OCI-LY7 (cell line): ENCODE measurements at regions of chr12 and their contacts with region 1.

Region 1: GRCh38 chr12:122003651-122004611 is 17.8 kb upstream of the BCL7A start:
- DNase-seq: peak; percentile 99
- H3K4me3 ChIP-seq: peak overlapping the region; percentile 78
- H3K27ac ChIP-seq: peak overlapping the region; percentile 100
- H3K4me1 ChIP-seq: peaks cover 80% of the 10 kb centered on the region
- CTCF ChIP-seq: no peak

Region 2: GRCh38 chr12:120292661-120293531 is 1711.0 kb before region 1 on chr12 and contains the start of gene RNU4-1:
- CTCF ChIA-PET with region 1: no interaction called
- POLR2A ChIA-PET with region 1: no interaction called
- intact Hi-C with region 1: loop called (anchors 10 kb)
- DNase-seq: peak; percentile 97
- H3K4me3 ChIP-seq: peak within 1 kb of the TSS; percentile 68
- H3K27ac ChIP-seq: peak within 1 kb of the TSS; percentile 89
- H3K4me1 ChIP-seq: peaks cover 32% of the 10 kb centered on the region
- CTCF ChIP-seq: no peak
- total RNA-seq, gene RNU4-1: under 0.01 TPM in 1 of 2 replicates, not detected in the other

Region 3: GRCh38 chr12:121917979-121918678 is 85.8 kb before region 1 on chr12 and contains the start of gene CFAP251:
- CTCF ChIA-PET with region 1: interaction called, 3 read pairs
- POLR2A ChIA-PET with region 1: interaction called, 6 read pairs
- intact Hi-C with region 1: loop called (anchors 1 kb)
- DNase-seq: peak; percentile 96
- H3K4me3 ChIP-seq: peak within 1 kb of the TSS; percentile 69
- H3K27ac ChIP-seq: peak within 1 kb of the TSS; percentile 45
- H3K4me1 ChIP-seq: peaks cover 37% of the 10 kb centered on the region
- CTCF ChIP-seq: peak; percentile 75
- total RNA-seq, gene CFAP251: 4.1 and 6.6 TPM in 2 replicates

Region 4: DNA sequence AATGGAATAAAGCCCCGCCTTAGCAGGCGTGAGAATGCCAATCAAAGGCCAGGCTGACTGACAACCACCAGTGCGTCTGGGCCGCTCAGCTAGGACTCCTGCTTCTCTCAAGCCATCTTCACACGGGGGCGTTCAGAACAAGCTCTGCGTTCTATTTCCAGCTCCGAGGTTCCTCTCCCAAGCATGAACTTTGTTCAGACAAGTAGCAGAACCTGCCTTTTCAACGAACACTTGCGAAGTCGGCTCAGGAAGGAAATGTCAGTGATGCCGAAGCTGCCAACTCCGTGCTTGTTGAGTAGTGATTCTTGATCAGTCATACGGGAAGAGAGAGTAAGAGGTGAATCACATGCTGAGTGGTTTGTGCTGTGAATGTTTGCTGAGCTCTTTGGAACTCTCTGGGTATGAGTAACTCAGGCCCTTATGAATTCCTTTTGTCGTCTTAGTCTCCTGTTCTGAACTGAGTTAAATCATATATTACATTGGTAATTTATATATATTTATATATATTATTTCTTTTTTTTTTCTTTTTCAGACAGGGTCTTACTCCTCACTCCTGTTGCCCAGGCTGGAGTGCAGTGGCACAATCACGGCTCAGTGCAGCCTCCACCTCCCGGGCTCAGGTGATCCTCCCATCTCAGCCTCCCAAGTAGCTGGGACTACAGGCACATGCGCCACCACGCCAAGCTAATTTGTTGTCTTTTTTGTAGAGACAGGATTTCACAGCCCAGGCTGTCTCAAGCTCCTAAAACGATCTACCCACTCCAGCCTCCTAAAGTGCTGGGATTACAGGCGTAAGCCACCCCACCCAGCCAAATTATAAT is 11.7 kb before region 1 on chr12:
- CTCF ChIA-PET with region 1: interaction called, 3 read pairs
- POLR2A ChIA-PET with region 1: interaction called, 34 read pairs
- intact Hi-C with region 1: no loop called
- DNase-seq: no peak
- H3K4me3 ChIP-seq: no peak overlapping the region
- H3K27ac ChIP-seq: peak overlapping the region; percentile 56
- H3K4me1 ChIP-seq: peaks cover 62% of the 10 kb centered on the region
- CTCF ChIP-seq: no peak

Region 5: DNA sequence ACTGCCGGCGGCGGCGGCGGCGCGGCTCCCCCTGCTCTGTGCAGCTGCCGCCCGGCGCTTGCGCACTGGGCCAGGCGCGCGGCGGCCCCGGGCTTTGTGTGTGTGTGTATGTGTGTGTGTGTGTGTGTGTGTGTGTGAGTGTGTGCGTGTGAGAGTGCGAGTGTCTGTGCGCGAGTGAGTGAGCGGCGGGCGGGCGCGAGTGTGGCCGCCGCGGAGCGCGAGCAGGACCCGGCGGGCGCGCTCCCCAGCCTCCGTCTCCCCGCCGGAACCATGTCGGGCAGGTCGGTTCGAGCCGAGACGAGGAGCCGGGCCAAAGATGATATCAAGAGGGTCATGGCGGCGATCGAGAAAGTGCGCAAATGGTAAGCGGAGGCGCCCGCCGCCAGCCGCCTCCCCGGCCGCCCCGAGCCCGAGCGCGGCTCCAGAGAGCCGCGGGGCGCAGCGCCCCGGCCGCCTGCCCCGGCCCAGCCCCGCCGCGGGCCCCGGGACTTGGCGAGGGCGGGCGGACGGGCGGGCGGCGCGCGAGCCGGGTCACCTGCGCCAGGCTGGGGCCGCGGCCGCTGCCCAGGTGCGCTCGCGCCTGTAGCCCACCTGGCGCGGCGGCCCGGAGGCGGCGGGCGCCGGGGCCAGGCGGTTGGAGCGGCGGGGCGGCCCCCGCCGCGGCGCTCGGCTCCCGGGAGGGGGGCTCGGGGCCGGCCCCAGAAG is 18.0 kb after region 1 on chr12 and contains the start of gene BCL7A:
- CTCF ChIA-PET with region 1: interaction called, 5 read pairs
- POLR2A ChIA-PET with region 1: interaction called, 332 read pairs
- intact Hi-C with region 1: loop called (anchors 1 kb)
- DNase-seq: peak; percentile 83
- H3K4me3 ChIP-seq: peak within 1 kb of the TSS; percentile 95
- H3K27ac ChIP-seq: peak within 1 kb of the TSS; percentile 94
- H3K4me1 ChIP-seq: peaks cover 68% of the 10 kb centered on the region
- CTCF ChIP-seq: no peak
- total RNA-seq, gene BCL7A: 66.2 and 76.2 TPM in 2 replicates